ENCODE measurements at regions of chr12 and their contacts with region 1.

Region 1: GRCh38 chr12:110431957-110432587 is 18.1 kb downstream of the ARPC3 start:
- DNase-seq: no peak
- ATAC-seq: no peak
- H3K4me3 Mint-ChIP-seq: no peak overlapping the region
- H3K27ac Mint-ChIP-seq: no peak overlapping the region
- H3K4me1 Mint-ChIP-seq: no peaks in the 10 kb centered on the region
- H3K27me3 Mint-ChIP-seq: no peaks in the 10 kb centered on the region

Region 2: GRCh38 chr12:110349531-110350151 is 82.4 kb before region 1 on chr12:
- CTCF ChIA-PET with region 1: interaction called, 31 read pairs
- POLR2A ChIA-PET with region 1: no interaction called
- DNase-seq: peak; percentile 61
- ATAC-seq: peak; percentile 80
- H3K4me3 Mint-ChIP-seq: peak overlapping the region; percentile 30
- H3K27ac Mint-ChIP-seq: peak overlapping the region; percentile 87
- H3K4me1 Mint-ChIP-seq: peaks cover 46% of the 10 kb centered on the region
- H3K27me3 Mint-ChIP-seq: no peaks in the 10 kb centered on the region

Region 3: GRCh38 chr12:110403146-110403975 is 28.7 kb before region 1 on chr12 and contains the start of gene ANAPC7:
- CTCF ChIA-PET with region 1: interaction called, 14 read pairs
- POLR2A ChIA-PET with region 1: interaction called, 3 read pairs
- DNase-seq: peak; percentile 90
- ATAC-seq: peak; percentile 90
- H3K4me3 Mint-ChIP-seq: peak within 1 kb of the TSS; percentile 97
- H3K27ac Mint-ChIP-seq: peak within 1 kb of the TSS; percentile 99
- H3K4me1 Mint-ChIP-seq: peaks cover 27% of the 10 kb centered on the region
- H3K27me3 Mint-ChIP-seq: no peaks in the 10 kb centered on the region
- total RNA-seq, gene ANAPC7: 53.0 to 64.3 TPM

Region 4: DNA sequence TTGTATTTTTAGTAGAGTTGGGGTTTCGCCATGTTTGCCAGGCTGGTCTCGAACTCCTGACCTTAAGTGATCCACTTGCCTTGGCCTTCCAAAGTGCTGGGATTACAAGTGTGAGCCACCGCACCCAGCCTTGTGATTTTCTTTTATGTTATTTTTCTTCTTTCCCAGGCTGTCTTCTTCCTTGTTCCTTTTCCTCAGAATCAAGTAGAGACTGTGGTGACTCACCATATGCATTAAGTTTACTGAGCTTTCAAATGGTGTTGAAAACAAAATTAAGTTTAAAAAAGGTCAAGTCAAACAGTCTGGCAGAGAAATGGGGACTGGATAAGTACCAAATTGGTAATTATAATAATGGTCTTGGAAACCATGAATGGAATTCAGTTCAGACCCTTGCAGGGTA is 12.4 kb after region 1 on chr12:
- CTCF ChIA-PET with region 1: interaction called, 23 read pairs
- POLR2A ChIA-PET with region 1: interaction called, 27 read pairs
- DNase-seq: no peak
- ATAC-seq: no peak
- H3K4me3 Mint-ChIP-seq: no peak overlapping the region
- H3K27ac Mint-ChIP-seq: no peak overlapping the region
- H3K4me1 Mint-ChIP-seq: peaks cover 26% of the 10 kb centered on the region
- H3K27me3 Mint-ChIP-seq: no peaks in the 10 kb centered on the region

Measured in activated CD8-positive, alpha-beta T cell treated with anti-CD3 and anti-CD28 coated beads, Interleukin-2, amount 10 ng/mL, durations not matched to agents 7 days and 5 days (primary cell).